ENCODE measurements at regions of chr3 and their contacts with region 1.

Region 1: DNA sequence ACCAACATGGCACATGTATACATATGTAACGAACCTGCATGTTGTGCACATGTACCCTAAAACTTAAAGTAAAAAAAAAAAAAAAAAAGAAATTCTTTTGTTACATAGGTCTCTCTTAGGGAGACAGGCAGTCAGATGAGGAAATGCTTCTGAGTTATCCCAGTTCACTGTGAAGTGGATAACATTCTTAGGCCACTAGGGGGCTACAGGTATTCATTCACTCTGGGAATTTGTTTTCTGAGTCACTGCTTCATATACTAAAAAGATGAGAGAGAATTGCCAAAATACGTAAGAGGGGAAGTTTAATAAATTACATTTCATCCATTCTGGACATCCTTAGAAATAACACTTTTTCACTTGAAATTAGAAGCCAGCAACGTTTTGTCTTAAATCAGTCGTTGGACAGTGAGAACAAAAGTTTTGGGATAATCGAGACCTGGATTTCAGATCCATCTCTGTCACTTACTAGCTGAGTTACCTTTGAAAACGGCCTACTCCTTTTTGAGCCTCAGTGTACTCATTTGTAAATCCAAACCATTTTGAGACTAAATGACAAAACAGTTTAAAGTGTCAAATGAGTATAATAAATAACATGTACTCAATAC is 738.4 kb upstream of the ALCAM start:
- DNase-seq: peak; percentile 22
- H3K4me3 ChIP-seq: no peak overlapping the region
- CTCF ChIP-seq: peak; percentile 72

Region 2: DNA sequence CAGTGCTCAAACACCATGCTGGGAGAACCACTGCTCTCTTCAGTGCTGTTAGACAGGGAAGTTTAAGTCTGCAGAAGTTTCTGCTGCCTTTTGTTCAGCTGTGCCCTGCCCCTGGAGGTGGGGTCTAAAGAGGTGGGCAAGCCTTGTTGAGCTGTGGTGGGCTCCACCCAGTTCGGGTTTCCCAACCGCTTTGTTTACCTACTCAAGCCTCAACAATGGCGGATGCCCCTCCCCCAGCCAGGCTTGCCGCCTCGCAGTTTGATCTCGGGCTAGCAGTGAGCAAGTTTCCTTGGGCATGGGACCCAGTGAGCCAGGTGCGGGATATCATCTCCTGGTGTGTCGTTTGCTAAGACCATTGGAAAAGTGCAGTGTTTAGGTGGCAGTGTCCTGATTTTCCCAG is 68.2 kb after region 1 on chr3:
- in situ Hi-C with region 1: no loop called
- DNase-seq: no peak
- H3K4me3 ChIP-seq: no peak overlapping the region
- CTCF ChIP-seq: no peak

Region 3: DNA sequence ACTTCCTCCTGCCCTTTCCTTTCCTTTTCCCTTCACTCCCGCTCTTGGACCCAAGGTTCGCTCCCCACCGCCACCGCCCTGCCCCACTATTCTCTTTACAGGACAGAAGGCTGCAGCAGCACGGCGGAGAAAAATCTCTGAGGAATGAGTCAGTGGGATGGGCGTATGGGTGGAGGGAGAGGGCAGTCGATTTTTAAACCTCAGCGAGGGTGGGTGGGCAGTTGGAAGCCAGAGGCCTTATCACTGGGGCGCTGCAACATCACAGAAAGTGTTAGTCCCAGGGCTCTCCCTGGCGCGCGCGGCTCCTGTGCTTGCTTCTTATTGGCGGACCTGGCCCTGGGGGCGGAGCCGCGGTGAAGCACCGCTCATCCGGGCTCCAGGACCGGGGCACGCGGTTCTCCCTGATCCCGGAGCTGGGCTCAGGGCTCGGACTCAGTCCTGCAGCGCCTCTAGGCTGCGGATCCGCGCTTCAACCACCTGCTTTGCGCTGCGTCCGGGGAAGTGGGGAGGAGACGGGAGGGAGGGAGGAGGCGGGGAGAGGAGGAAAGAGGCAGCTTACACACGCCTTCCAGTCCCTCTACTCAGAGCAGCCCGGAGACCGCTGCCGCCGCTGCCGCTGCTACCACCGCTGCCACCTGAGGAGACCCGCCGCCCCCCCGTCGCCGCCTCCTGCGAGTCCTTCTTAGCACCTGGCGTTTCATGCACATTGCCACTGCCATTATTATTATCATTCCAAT is 738.2 kb after region 1 on chr3 and contains the start of gene ALCAM:
- in situ Hi-C with region 1: loop called (anchors 25 kb)
- DNase-seq: peak; percentile 98
- H3K4me3 ChIP-seq: peak within 1 kb of the TSS; percentile 90
- CTCF ChIP-seq: peak; percentile 67